ENCODE measurements at regions of chr21 and their contacts with region 1.

Region 1: GRCh38 chr21:31180256-31181081 is 142.2 kb upstream of the KRTAP19-8 start:
- DNase-seq: peak; percentile 35
- ATAC-seq: no peak
- H3K4me3 Mint-ChIP-seq: peak overlapping the region; percentile 84
- H3K27ac Mint-ChIP-seq: peak overlapping the region; percentile 94
- H3K4me1 Mint-ChIP-seq: peaks cover 74% of the 10 kb centered on the region
- H3K27me3 Mint-ChIP-seq: no peaks in the 10 kb centered on the region
- CTCF ChIP-seq: peak; percentile 72

Region 2: GRCh38 chr21:31107871-31108270 is 72.6 kb before region 1 on chr21:
- CTCF ChIA-PET with region 1: interaction called, 79 read pairs
- POLR2A ChIA-PET with region 1: no interaction called
- intact Hi-C with region 1: no loop called
- DNase-seq: no peak
- ATAC-seq: no peak
- H3K4me3 Mint-ChIP-seq: no peak overlapping the region
- H3K27ac Mint-ChIP-seq: no peak overlapping the region
- H3K4me1 Mint-ChIP-seq: peaks cover 12% of the 10 kb centered on the region
- H3K27me3 Mint-ChIP-seq: no peaks in the 10 kb centered on the region
- CTCF ChIP-seq: no peak

Region 3: GRCh38 chr21:31132574-31133242 is 47.8 kb before region 1 on chr21:
- CTCF ChIA-PET with region 1: interaction called, 6 read pairs
- POLR2A ChIA-PET with region 1: interaction called, 7 read pairs
- intact Hi-C with region 1: loop called (anchors 5 kb)
- DNase-seq: peak; percentile 83
- ATAC-seq: peak; percentile 77
- H3K4me3 Mint-ChIP-seq: peak overlapping the region; percentile 16
- H3K27ac Mint-ChIP-seq: peak overlapping the region; percentile 78
- H3K4me1 Mint-ChIP-seq: peaks cover 54% of the 10 kb centered on the region
- H3K27me3 Mint-ChIP-seq: no peaks in the 10 kb centered on the region
- CTCF ChIP-seq: no peak

Region 4: DNA sequence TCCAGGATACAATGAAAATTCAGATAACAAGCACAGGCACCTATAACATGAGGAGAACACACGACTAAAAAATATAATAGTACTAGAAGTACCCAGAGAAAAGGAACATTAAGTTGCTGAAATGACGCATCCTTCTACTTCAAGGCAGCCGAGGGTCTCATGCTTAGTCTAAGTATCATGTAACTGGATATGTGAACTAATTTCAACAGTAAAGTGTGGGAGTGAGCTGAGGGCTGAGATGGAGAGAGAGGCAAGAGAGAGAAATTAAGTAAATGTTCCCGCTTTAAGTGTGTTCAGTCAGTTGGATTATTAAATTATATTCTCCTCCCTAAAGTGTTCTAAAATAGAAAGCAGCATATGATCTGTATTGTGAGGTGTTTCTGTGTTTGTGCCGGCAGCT is 10.0 kb after region 1 on chr21:
- CTCF ChIA-PET with region 1: interaction called, 20 read pairs
- POLR2A ChIA-PET with region 1: interaction called, 27 read pairs
- intact Hi-C with region 1: no loop called
- DNase-seq: no peak
- ATAC-seq: no peak
- H3K4me3 Mint-ChIP-seq: no peak overlapping the region
- H3K27ac Mint-ChIP-seq: peak overlapping the region; percentile 32
- H3K4me1 Mint-ChIP-seq: peaks cover 56% of the 10 kb centered on the region
- H3K27me3 Mint-ChIP-seq: no peaks in the 10 kb centered on the region
- CTCF ChIP-seq: no peak

Region 5: GRCh38 chr21:31276663-31277062 is 96.2 kb after region 1 on chr21:
- CTCF ChIA-PET with region 1: no interaction called
- POLR2A ChIA-PET with region 1: no interaction called
- intact Hi-C with region 1: no loop called
- DNase-seq: no peak
- ATAC-seq: no peak
- H3K4me3 Mint-ChIP-seq: no peak overlapping the region
- H3K27ac Mint-ChIP-seq: no peak overlapping the region
- H3K4me1 Mint-ChIP-seq: peaks cover 25% of the 10 kb centered on the region
- H3K27me3 Mint-ChIP-seq: no peaks in the 10 kb centered on the region
- CTCF ChIP-seq: no peak

Region 6: GRCh38 chr21:31558962-31559367 is 378.5 kb after region 1 on chr21:
- CTCF ChIA-PET with region 1: interaction called, 11 read pairs
- POLR2A ChIA-PET with region 1: interaction called, 3 read pairs
- intact Hi-C with region 1: no loop called
- DNase-seq: peak; percentile 93
- ATAC-seq: peak; percentile 85
- H3K4me3 Mint-ChIP-seq: peak overlapping the region; percentile 86
- H3K27ac Mint-ChIP-seq: no peak overlapping the region
- H3K4me1 Mint-ChIP-seq: peaks cover 34% of the 10 kb centered on the region
- H3K27me3 Mint-ChIP-seq: peaks cover 26% of the 10 kb centered on the region
- CTCF ChIP-seq: peak; percentile 27

Measured in activated CD8-positive, alpha-beta T cell treated with anti-CD3 and anti-CD28 coated beads for 36 hours (primary cell).